Transverse colon (tissue), 4 donors: ENCODE measurements at regions of chr6 and their contacts with region 1.

Region 1: DNA sequence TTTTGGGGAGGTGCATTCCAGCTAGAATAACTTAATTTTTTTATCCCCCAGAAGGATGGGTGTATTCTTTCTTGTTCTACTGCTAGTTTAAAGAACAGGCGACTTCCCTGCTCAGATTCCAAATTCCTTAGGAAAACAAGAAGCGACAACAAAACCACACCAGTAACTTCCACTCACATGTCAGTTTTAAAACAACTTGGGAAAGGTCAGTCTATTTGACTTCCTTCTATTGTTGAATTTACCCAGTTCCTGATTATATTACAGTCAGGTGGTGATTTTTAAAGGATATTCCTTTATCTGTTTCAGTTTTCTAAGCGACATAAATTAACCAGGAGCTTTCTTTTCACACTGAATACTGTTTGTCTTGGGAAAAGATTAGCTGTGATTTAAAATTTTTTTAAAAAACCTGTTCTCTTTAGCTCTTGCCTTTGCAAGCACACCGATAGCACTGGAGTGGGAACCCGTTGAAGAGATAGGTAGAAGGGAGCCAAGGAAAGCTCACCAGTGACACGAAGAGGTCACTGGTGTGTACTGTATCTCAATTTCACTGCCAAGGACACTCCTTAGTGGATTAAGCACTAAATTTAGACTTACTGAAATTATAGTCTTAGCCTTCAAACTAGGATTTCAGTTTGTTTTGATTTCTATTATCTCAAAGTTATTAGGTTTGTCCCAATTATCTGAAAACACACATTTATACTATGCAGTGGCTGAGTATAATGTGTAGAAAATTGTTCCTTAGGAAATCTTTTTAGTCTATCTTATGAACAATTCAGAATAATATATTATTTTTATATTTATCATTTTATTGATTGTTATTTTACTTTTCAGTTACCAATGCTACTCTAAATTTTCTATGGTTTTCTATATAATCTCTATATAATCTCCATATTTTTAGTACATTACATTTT is 22.3 kb downstream of the MARCKS start:
- DNase-seq: peak; percentile 63
- H3K4me3 ChIP-seq: peak overlapping the region in 1 of 4 donors; percentile 26
- H3K27ac ChIP-seq: peak overlapping the region; percentile 18 to 56 (median 31)
- H3K4me1 ChIP-seq: peaks cover 0 to 12% (median 5%) of the 10 kb centered on the region in 4 donors
- H3K27me3 ChIP-seq: no peaks in the 10 kb centered on the region
- CTCF ChIP-seq: peak; percentile 64 to 79 (median 67)
- EP300 ChIP-seq: no peak
- POLR2A ChIP-seq: no peak

Region 2: DNA sequence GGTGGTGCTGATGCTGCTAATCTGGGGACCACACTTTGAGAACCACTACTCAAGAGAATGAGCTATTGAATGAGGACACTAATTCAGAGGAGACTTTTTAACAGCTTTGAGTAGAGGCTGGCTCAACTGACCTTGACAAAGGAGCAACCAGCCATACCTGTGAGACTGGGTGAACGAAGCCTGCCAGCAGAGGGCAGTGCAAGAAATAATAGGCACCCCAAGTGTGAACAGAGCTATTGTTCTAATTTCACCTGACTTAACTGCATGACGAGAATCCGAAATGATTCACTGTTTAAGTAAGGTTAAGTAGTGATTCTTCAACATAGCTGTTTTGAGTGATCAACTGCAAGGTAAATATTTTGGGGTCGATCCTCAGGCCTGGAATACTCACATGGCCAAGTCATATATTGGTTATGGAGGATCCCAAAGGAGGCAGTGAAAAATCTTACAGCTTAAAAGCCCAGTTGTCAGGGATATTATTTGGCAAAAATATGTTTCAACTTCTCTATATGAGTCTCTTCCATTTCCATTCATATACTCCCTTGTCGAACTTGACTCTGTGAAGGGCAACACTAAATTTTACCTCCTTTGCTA is 572.8 kb before region 1 on chr6:
- in situ Hi-C with region 1: loop called (anchors 10 to 25 kb)
- intact Hi-C with region 1: no loop called
- DNase-seq: peak; percentile 83
- H3K4me3 ChIP-seq: no peak overlapping the region
- H3K27ac ChIP-seq: no peak overlapping the region
- H3K4me1 ChIP-seq: no peaks in the 10 kb centered on the region
- H3K27me3 ChIP-seq: no peaks in the 10 kb centered on the region
- CTCF ChIP-seq: peak; percentile 64 to 79 (median 69)
- EP300 ChIP-seq: no peak
- POLR2A ChIP-seq: no peak

Region 3: GRCh38 chr6:113317881-113318574 is 561.4 kb before region 1 on chr6:
- in situ Hi-C with region 1: loop called in 3 of 4 experiments (anchors 10 to 25 kb)
- intact Hi-C with region 1: no loop called
- DNase-seq: no peak
- H3K4me3 ChIP-seq: no peak overlapping the region
- H3K27ac ChIP-seq: no peak overlapping the region
- H3K4me1 ChIP-seq: no peaks in the 10 kb centered on the region
- H3K27me3 ChIP-seq: no peaks in the 10 kb centered on the region
- CTCF ChIP-seq: no peak
- EP300 ChIP-seq: no peak
- POLR2A ChIP-seq: no peak

Region 4: GRCh38 chr6:114714836-114715507 is 835.5 kb after region 1 on chr6:
- in situ Hi-C with region 1: no loop called
- intact Hi-C with region 1: no loop called
- DNase-seq: no peak
- H3K4me3 ChIP-seq: no peak overlapping the region
- H3K27ac ChIP-seq: no peak overlapping the region
- H3K4me1 ChIP-seq: no peaks in the 10 kb centered on the region
- H3K27me3 ChIP-seq: no peaks in the 10 kb centered on the region
- CTCF ChIP-seq: no peak
- EP300 ChIP-seq: no peak
- POLR2A ChIP-seq: no peak